ENCODE measurements at regions of chr5 and their contacts with region 1.

Region 1: DNA sequence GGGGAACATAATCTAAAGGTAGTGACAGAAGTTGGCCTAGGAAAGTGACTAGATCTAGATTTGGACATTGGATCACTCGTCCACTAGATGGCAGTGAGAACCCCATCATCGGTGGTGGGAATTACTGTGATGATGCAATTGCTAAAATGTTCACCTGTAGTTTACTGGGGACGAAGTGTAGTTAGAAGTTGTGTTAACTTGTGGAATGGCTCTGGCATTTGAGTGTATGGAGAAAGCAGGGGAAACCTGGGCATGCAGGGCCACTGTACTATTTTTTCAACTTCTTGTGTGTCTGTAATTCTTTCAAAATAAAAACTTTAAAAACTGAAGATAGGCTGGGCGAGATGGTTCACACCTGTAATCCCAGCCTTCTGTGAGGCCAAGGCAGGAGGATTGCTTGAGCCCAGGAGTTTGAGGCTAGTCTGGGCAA is 75.5 kb downstream of the PHAX start:
- DNase-seq: peak; percentile 66
- ATAC-seq: peak; percentile 74
- H3K4me3 ChIP-seq: no peak overlapping the region
- H3K27ac ChIP-seq: no peak overlapping the region
- H3K4me1 ChIP-seq: peaks cover 29% of the 10 kb centered on the region
- H3K27me3 ChIP-seq: peaks cover 0 to 3% of the 10 kb centered on the region in 2 experiments; a peak in 2 of 5 replicates
- CTCF ChIP-seq: peak; percentile 92
- EP300 ChIP-seq: no peak
- POLR2A ChIP-seq: no peak
- RAD21 ChIP-seq: peak; percentile 82

Region 2: GRCh38 chr5:126544087-126544740 is 132.0 kb before region 1 on chr5:
- CTCF ChIA-PET with region 1: no interaction called
- POLR2A ChIA-PET with region 1: no interaction called
- in situ Hi-C with region 1: no loop called
- intact Hi-C with region 1: no loop called
- DNase-seq: peak; percentile 58
- ATAC-seq: peak; percentile 86
- H3K4me3 ChIP-seq: no peak overlapping the region
- H3K27ac ChIP-seq: peak overlapping the region; percentile 60
- H3K4me1 ChIP-seq: peaks cover 26% of the 10 kb centered on the region
- H3K27me3 ChIP-seq: no peaks in the 10 kb centered on the region
- CTCF ChIP-seq: peak; percentile 79
- EP300 ChIP-seq: no peak
- POLR2A ChIP-seq: no peak
- RAD21 ChIP-seq: peak; percentile 57; the same call in 1 of the 2 replicates

Region 3: GRCh38 chr5:126801992-126802294 is 125.7 kb after region 1 on chr5:
- CTCF ChIA-PET with region 1: no interaction called
- POLR2A ChIA-PET with region 1: no interaction called
- in situ Hi-C with region 1: no loop called
- intact Hi-C with region 1: loop called (anchors 5 kb)
- DNase-seq: peak; percentile 20
- ATAC-seq: no peak
- H3K4me3 ChIP-seq: no peak overlapping the region
- H3K27ac ChIP-seq: no peak overlapping the region
- H3K4me1 ChIP-seq: no peaks in the 10 kb centered on the region
- H3K27me3 ChIP-seq: no peaks in the 10 kb centered on the region
- CTCF ChIP-seq: peak; percentile 29; the same call in 1 of the 2 replicates
- EP300 ChIP-seq: no peak
- POLR2A ChIP-seq: no peak
- RAD21 ChIP-seq: no peak

Measured in HepG2 (cell line).